ENCODE measurements at regions of chr14 and their contacts with region 1.

Region 1: DNA sequence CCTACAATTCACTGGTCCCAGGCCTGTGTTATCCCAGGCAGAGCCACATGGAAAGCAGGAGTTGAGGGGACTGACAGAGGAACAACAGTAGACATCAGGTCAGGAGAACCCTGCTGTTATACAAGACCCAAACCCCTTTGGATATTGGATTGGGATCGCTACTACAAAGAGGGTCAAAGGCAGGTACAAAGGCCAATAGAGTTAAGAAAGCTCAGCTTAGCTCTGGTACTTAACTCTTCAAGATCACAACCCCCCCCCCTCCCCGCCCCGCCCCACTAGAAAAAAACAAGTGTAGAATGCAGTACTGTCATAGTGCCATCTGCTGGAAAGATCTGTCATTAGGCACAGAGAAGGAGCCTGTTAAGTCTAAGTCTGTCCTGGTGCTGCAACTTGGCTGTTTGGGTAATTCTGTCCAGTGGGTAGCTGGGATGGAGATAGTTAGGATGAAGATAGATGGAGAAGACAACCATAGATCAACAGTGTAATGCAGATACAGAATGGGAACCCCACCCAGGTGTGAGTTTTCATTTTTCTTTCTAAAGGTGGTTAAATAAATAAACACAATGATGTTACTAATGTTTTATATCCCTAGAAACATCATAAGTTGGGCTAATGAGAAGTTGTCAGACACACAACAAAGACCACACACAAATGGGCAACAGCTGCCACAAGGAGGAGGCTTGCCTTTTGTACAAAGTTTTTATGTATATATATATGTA is 17.2 kb downstream of the REM2 start:
- DNase-seq: peak in 5 of 9 experiments; percentile 33 to 82 (median 48)
- ATAC-seq: peak; percentile 86
- H3K4me3 ChIP-seq: no peak overlapping the region
- H3K4me3 Mint-ChIP-seq: no peak overlapping the region
- H3K27ac ChIP-seq: no peak overlapping the region
- H3K27ac Mint-ChIP-seq: no peak overlapping the region
- H3K4me1 ChIP-seq: peaks cover 3% of the 10 kb centered on the region
- H3K4me1 Mint-ChIP-seq: peaks cover 6% of the 10 kb centered on the region
- H3K27me3 ChIP-seq: no peaks in the 10 kb centered on the region
- H3K27me3 Mint-ChIP-seq: no peaks in the 10 kb centered on the region
- CTCF ChIP-seq: peak; percentile 60

Region 2: GRCh38 chr14:22653012-22653621 is 247.1 kb before region 1 on chr14:
- CTCF ChIA-PET with region 1: no interaction called
- POLR2A ChIA-PET with region 1: no interaction called
- intact Hi-C with region 1: loop called in 1 of 2 experiments (anchors 5 kb)
- DNase-seq: peak; percentile 8 to 70 (median 50)
- ATAC-seq: peak; percentile 94
- H3K4me3 ChIP-seq: no peak overlapping the region
- H3K4me3 Mint-ChIP-seq: no peak overlapping the region
- H3K27ac ChIP-seq: no peak overlapping the region
- H3K27ac Mint-ChIP-seq: no peak overlapping the region
- H3K4me1 ChIP-seq: no peaks in the 10 kb centered on the region
- H3K4me1 Mint-ChIP-seq: no peaks in the 10 kb centered on the region
- H3K27me3 ChIP-seq: no peaks in the 10 kb centered on the region
- H3K27me3 Mint-ChIP-seq: no peaks in the 10 kb centered on the region
- CTCF ChIP-seq: peak; percentile 72

Region 3: GRCh38 chr14:22822571-22823098 is 77.6 kb before region 1 on chr14:
- CTCF ChIA-PET with region 1: interaction called, 100 read pairs
- POLR2A ChIA-PET with region 1: no interaction called
- intact Hi-C with region 1: loop called (anchors 1 kb)
- DNase-seq: peak; percentile 41 to 85 (median 76)
- ATAC-seq: peak; percentile 89
- H3K4me3 ChIP-seq: peak overlapping the region; percentile 26 to 35
- H3K4me3 Mint-ChIP-seq: peak overlapping the region; percentile 61
- H3K27ac ChIP-seq: no peak overlapping the region
- H3K27ac Mint-ChIP-seq: no peak overlapping the region
- H3K4me1 ChIP-seq: peaks cover 10% of the 10 kb centered on the region
- H3K4me1 Mint-ChIP-seq: peaks cover 16% of the 10 kb centered on the region
- H3K27me3 ChIP-seq: peaks cover 4 to 21% of the 10 kb centered on the region in 2 experiments
- H3K27me3 Mint-ChIP-seq: peaks cover 23% of the 10 kb centered on the region
- CTCF ChIP-seq: peak; percentile 81

Region 4: GRCh38 chr14:22865424-22866405 is 34.5 kb before region 1 on chr14:
- CTCF ChIA-PET with region 1: interaction called, 58 read pairs
- POLR2A ChIA-PET with region 1: no interaction called
- intact Hi-C with region 1: no loop called
- DNase-seq: peak in 2 of 9 experiments; percentile 29 to 35
- ATAC-seq: no peak
- H3K4me3 ChIP-seq: no peak overlapping the region
- H3K4me3 Mint-ChIP-seq: no peak overlapping the region
- H3K27ac ChIP-seq: no peak overlapping the region
- H3K27ac Mint-ChIP-seq: no peak overlapping the region
- H3K4me1 ChIP-seq: peaks cover 7% of the 10 kb centered on the region
- H3K4me1 Mint-ChIP-seq: peaks cover 11% of the 10 kb centered on the region
- H3K27me3 ChIP-seq: no peaks in the 10 kb centered on the region
- H3K27me3 Mint-ChIP-seq: peaks cover 8% of the 10 kb centered on the region
- CTCF ChIP-seq: no peak

Measured in CD8-positive, alpha-beta T cell (primary cell).